Posterior vena cava (tissue), 2 donors: ENCODE measurements at regions of chr11 and their contacts with region 1.

Region 1: GRCh38 chr11:22337596-22338485 is at the start of gene SLC17A6:
- DNase-seq: no peak
- total RNA-seq, gene SLC17A6: not detected

Region 2: DNA sequence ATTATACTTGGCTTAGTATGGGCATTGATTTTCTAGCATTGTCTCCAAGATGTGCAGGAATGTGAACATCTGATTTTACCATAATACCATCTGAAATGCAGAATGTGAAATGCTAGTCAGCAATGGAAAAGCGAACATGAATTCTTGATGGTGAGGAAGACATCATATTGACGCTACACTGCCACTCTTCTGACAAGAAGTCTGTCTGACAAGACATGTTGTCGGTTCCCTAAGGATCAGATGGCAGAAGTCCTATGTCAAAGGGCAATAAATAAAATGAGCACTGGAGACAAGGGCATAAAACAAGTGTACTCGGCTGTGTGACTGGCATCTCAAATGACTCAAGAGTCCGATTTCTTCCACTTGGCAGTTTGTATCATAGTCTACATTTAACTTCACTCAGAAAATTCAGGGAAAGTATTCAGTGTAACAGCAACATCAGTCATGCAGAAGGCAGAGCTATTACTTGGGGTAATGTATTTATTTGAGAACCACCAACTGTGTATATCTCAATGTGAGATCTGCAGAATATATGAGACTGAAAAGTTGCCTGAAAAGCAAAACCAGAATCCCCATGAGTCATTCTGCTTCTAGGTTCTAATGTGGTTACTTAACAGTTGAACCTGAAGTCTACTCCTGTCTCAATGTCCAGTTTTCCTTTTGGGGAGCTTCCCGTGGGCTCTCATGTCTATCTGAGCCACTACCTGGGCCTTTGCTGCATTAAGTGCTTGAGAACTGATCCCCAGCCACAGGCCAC is 51.9 kb after region 1 on chr11:
- intact Hi-C with region 1: loop called in 1 of 2 experiments (anchors 2 kb)
- DNase-seq: no peak

Region 3: GRCh38 chr11:22787551-22788162 is 449.8 kb after region 1 on chr11:
- intact Hi-C with region 1: loop called in 1 of 2 experiments (anchors 10 kb)
- DNase-seq: no peak